Naive thymus-derived CD4-positive, alpha-beta T cell (primary cell): ENCODE measurements at regions of chr10 and their contacts with region 1.

Region 1: GRCh38 chr10:17430647-17431355 is 23.6 kb downstream of the ST8SIA6 start:
- DNase-seq: peak in 8 of 9 donors; percentile 44 to 68 (median 60)
- ATAC-seq: peak; percentile 43
- H3K4me3 ChIP-seq: no peak overlapping the region
- H3K4me3 Mint-ChIP-seq: peak overlapping the region in 9 of 10 donors; percentile 11 to 81 (median 42)
- H3K27ac ChIP-seq: no peak overlapping the region
- H3K27ac Mint-ChIP-seq: peak overlapping the region in 8 of 9 donors; percentile 20 to 97 (median 90)
- H3K4me1 ChIP-seq: peaks cover 37 to 43% of the 10 kb centered on the region in 2 donors
- H3K4me1 Mint-ChIP-seq: peaks cover 43 to 58% (median 53%) of the 10 kb centered on the region in 7 donors
- H3K27me3 ChIP-seq: no peaks in the 10 kb centered on the region
- H3K27me3 Mint-ChIP-seq: peaks cover 0 to 24% (median 0%) of the 10 kb centered on the region in 5 donors

Region 2: GRCh38 chr10:15859906-15860691 is 1570.7 kb before region 1 on chr10 and contains the start of gene MINDY3:
- CTCF ChIA-PET with region 1: no interaction called
- POLR2A ChIA-PET with region 1: no interaction called
- intact Hi-C with region 1: loop called in 1 of 2 experiments (anchors 10 kb)
- DNase-seq: peak; percentile 54 to 86 (median 82)
- ATAC-seq: peak; percentile 94
- H3K4me3 ChIP-seq: peak within 1 kb of the TSS; percentile 97
- H3K4me3 Mint-ChIP-seq: peak within 1 kb of the TSS; percentile 95 to 100 (median 98)
- H3K27ac ChIP-seq: peak within 1 kb of the TSS; percentile 55
- H3K27ac Mint-ChIP-seq: peak within 1 kb of the TSS; percentile 90 to 96 (median 93)
- H3K4me1 ChIP-seq: peaks cover 10 to 22% of the 10 kb centered on the region in 2 donors
- H3K4me1 Mint-ChIP-seq: peaks cover 25 to 53% (median 45%) of the 10 kb centered on the region in 7 donors
- H3K27me3 ChIP-seq: no peaks in the 10 kb centered on the region
- H3K27me3 Mint-ChIP-seq: peaks cover 19 to 24% (median 22%) of the 10 kb centered on the region in 5 donors
- total RNA-seq, gene MINDY3: 21.4 to 43.8 (median 37.4) TPM

Region 3: DNA sequence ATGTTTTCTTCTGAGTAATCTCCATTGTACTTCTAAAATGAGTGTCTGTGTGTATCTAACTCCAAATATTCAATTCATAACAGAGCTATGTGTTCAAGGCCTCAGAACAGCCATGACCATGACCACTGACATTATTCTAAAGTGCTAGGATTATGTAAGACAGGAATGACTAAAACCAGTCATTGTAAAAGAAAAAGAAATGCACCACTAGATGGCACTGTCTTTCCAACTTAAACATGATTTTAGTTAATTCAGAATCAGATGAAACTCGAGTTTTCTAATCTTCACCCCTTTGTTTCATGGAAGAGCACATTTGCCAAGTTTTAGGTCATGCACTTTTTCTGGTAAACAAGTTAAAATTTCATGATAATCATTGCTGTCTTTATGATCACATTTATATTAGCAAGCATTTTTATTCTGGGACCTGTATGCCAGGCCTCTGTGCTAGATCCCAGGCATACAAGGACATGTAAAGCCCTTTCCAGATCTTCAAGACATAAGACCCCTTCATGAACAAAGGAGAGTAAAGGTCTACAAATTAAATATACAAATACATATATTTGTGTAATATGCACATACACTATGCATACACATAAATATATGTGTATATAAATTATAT is 587.4 kb before region 1 on chr10:
- CTCF ChIA-PET with region 1: interaction called, 3 read pairs
- POLR2A ChIA-PET with region 1: interaction called, 3 read pairs
- intact Hi-C with region 1: loop called (anchors 1 kb)
- DNase-seq: peak in 7 of 9 donors; percentile 44 to 71 (median 63)
- ATAC-seq: peak; percentile 86
- H3K4me3 ChIP-seq: no peak overlapping the region
- H3K4me3 Mint-ChIP-seq: no peak overlapping the region
- H3K27ac ChIP-seq: no peak overlapping the region
- H3K27ac Mint-ChIP-seq: peak overlapping the region in 5 of 9 donors; percentile 18 to 43 (median 34)
- H3K4me1 ChIP-seq: no peaks in the 10 kb centered on the region
- H3K4me1 Mint-ChIP-seq: peaks cover 0 to 9% (median 3%) of the 10 kb centered on the region in 7 donors
- H3K27me3 ChIP-seq: no peaks in the 10 kb centered on the region
- H3K27me3 Mint-ChIP-seq: peaks cover 0 to 2% (median 0%) of the 10 kb centered on the region in 5 donors

Region 4: GRCh38 chr10:17144757-17145156 is 286.0 kb before region 1 on chr10:
- CTCF ChIA-PET with region 1: no interaction called
- POLR2A ChIA-PET with region 1: no interaction called
- intact Hi-C with region 1: loop called in 1 of 2 experiments (anchors 10 kb)
- DNase-seq: peak in 1 of 9 donors; percentile 56
- ATAC-seq: no peak
- H3K4me3 ChIP-seq: no peak overlapping the region
- H3K4me3 Mint-ChIP-seq: peak overlapping the region in 1 of 10 donors; percentile 46
- H3K27ac ChIP-seq: no peak overlapping the region
- H3K27ac Mint-ChIP-seq: peak overlapping the region in 4 of 9 donors; percentile 34 to 82 (median 74)
- H3K4me1 ChIP-seq: peaks cover 0 to 5% of the 10 kb centered on the region in 2 donors
- H3K4me1 Mint-ChIP-seq: peaks cover 4 to 32% (median 22%) of the 10 kb centered on the region in 7 donors
- H3K27me3 ChIP-seq: no peaks in the 10 kb centered on the region
- H3K27me3 Mint-ChIP-seq: peaks cover 0 to 2% (median 0%) of the 10 kb centered on the region in 5 donors

Region 5: DNA sequence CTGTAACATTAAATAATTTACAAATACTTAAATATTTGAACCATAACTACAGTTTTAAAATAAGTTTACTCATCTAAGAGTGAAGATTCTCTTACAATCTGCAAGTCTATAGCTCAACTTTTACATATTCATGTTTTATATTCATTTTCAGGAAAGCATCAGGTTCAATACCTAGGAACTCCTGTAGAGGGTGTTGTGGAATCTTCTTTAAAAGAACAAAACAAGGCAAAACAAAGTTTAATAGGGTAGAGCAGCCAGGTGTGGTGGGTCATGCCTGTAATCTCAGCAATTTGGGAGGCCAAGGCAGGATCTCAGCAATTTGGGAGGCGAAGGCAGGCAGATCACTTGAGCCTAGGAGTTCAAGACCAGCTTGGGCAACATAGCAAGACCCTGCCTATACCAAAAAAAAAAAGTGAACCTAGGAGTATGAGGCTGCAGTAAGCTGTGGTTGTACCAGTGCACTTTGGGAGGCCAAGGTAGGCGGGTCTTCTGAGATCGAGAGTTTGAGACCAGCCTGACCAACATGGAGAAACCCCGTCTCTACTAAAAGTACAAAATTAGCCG is 21.5 kb before region 1 on chr10:
- CTCF ChIA-PET with region 1: interaction called, 178 read pairs
- POLR2A ChIA-PET with region 1: interaction called, 200 read pairs
- intact Hi-C with region 1: loop called (anchors 1 kb)
- DNase-seq: peak in 6 of 9 donors; percentile 25 to 56 (median 54)
- ATAC-seq: peak; percentile 79
- H3K4me3 ChIP-seq: no peak overlapping the region
- H3K4me3 Mint-ChIP-seq: peak overlapping the region in 9 of 10 donors; percentile 4 to 69 (median 45)
- H3K27ac ChIP-seq: no peak overlapping the region
- H3K27ac Mint-ChIP-seq: peak overlapping the region; percentile 50 to 87 (median 78)
- H3K4me1 ChIP-seq: peaks cover 0 to 14% of the 10 kb centered on the region in 2 donors
- H3K4me1 Mint-ChIP-seq: peaks cover 14 to 32% (median 29%) of the 10 kb centered on the region in 7 donors
- H3K27me3 ChIP-seq: no peaks in the 10 kb centered on the region
- H3K27me3 Mint-ChIP-seq: peaks cover 0 to 25% (median 0%) of the 10 kb centered on the region in 5 donors

Region 6: DNA sequence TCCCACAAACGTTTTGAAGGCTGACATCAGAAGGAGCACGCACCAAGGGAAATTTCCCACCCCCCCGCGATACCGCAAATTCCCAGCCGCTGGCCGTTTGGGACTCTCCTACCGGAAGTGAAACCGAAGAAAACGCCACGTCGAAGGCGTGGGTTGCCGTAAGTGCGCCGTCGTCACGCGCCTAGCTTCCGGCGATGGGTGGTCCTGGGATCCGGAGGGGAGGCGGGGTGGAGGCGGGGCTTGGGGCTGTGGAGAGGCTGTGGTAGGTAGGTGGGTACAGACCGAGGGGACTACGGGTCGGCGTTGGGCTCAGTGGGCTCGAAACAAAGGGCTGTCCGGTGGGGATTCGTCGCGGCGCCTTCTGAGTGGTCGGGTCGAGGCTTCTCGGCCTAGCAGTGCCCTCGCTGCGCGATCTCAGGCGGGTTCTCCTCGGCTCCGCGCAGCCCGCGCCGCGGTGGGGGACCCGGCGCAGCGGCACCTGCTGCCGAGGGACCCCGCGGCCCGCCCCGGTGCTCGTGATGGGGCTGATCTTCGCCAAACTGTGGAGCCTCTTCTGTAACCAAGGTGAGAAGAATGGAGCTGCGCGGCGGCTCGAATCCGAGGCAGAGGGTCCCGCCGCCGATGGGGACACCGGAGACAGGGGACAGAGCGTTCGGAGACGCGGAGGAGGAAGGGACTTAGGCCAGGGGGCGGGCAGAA is 1228.5 kb after region 1 on chr10 and contains the start of gene ARL5B:
- CTCF ChIA-PET with region 1: no interaction called
- POLR2A ChIA-PET with region 1: no interaction called
- intact Hi-C with region 1: loop called in 1 of 2 experiments (anchors 10 kb)
- DNase-seq: peak; percentile 82 to 97 (median 93)
- ATAC-seq: peak; percentile 98
- H3K4me3 ChIP-seq: peak within 1 kb of the TSS; percentile 89
- H3K4me3 Mint-ChIP-seq: peak within 1 kb of the TSS; percentile 94 to 100 (median 99)
- H3K27ac ChIP-seq: peak within 1 kb of the TSS; percentile 92
- H3K27ac Mint-ChIP-seq: peak within 1 kb of the TSS; percentile 95 to 99 (median 99)
- H3K4me1 ChIP-seq: peaks cover 16 to 21% of the 10 kb centered on the region in 2 donors
- H3K4me1 Mint-ChIP-seq: peaks cover 28 to 56% (median 44%) of the 10 kb centered on the region in 7 donors
- H3K27me3 ChIP-seq: no peaks in the 10 kb centered on the region
- H3K27me3 Mint-ChIP-seq: no peaks in the 10 kb centered on the region
- total RNA-seq, gene ARL5B: 9.7 to 15.8 (median 13.9) TPM